Naive thymus-derived CD4-positive, alpha-beta T cell (primary cell): ENCODE measurements at regions of chr13 and their contacts with region 1.

Region 1: DNA sequence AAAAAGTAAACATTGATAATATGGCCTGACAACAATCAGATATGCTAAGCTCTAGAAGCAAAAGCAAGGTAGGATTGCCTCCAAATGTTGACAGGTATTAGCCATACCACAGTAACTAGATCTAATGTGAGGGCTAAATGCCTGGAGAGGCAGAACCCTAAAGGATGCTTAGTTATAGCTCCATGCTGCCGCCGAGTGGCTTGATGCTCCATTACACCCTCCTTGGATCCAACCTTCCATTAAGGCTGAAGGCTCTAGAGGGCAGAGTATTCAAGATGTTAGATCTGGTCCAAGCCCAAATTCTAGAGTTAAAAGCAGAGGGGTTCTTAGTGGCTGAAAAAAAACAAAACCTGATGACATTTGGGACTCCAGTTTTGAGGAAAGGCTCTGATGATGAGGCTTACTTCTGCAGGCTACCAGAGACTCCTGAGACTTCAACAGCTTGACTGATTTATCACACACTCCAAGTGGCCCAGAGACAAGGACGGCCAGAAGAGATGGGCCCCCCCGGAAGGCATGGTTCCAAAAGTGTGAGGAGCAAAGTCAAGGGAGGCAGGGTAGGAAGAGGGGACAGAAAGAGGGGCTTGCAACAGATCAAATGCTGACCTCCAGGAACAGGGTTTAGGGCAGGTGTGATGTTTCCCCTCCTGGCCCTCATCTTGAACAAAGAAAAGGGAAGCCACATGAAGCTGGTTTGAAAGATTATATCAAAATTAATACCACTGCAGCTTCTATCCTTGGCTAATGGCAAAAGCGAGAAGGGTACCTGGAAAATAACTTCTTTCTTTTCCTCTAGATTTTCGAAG is 21.9 kb upstream of the CPB2 start:
- DNase-seq: peak; percentile 44 to 74 (median 66)
- ATAC-seq: peak; percentile 94
- H3K4me3 ChIP-seq: no peak overlapping the region
- H3K4me3 Mint-ChIP-seq: peak overlapping the region in 3 of 10 donors; percentile 6 to 34 (median 8)
- H3K27ac ChIP-seq: peak overlapping the region; percentile 66
- H3K27ac Mint-ChIP-seq: peak overlapping the region; percentile 60 to 96 (median 87)
- H3K4me1 ChIP-seq: peaks cover 11 to 31% of the 10 kb centered on the region in 2 donors
- H3K4me1 Mint-ChIP-seq: peaks cover 35 to 54% (median 49%) of the 10 kb centered on the region in 7 donors
- H3K27me3 ChIP-seq: no peaks in the 10 kb centered on the region
- H3K27me3 Mint-ChIP-seq: peaks cover 0 to 2% (median 0%) of the 10 kb centered on the region in 5 donors

Region 2: GRCh38 chr13:45511310-45512097 is 615.3 kb before region 1 on chr13:
- CTCF ChIA-PET with region 1: interaction called, 4 read pairs
- POLR2A ChIA-PET with region 1: no interaction called
- intact Hi-C with region 1: loop called (anchors 1 kb)
- DNase-seq: peak in 7 of 9 donors; percentile 41 to 72 (median 63)
- ATAC-seq: peak; percentile 95
- H3K4me3 ChIP-seq: no peak overlapping the region
- H3K4me3 Mint-ChIP-seq: no peak overlapping the region
- H3K27ac ChIP-seq: no peak overlapping the region
- H3K27ac Mint-ChIP-seq: peak overlapping the region in 7 of 9 donors; percentile 22 to 60 (median 46)
- H3K4me1 ChIP-seq: no peaks in the 10 kb centered on the region
- H3K4me1 Mint-ChIP-seq: peaks cover 3 to 7% (median 5%) of the 10 kb centered on the region in 7 donors
- H3K27me3 ChIP-seq: no peaks in the 10 kb centered on the region
- H3K27me3 Mint-ChIP-seq: no peaks in the 10 kb centered on the region

Region 3: DNA sequence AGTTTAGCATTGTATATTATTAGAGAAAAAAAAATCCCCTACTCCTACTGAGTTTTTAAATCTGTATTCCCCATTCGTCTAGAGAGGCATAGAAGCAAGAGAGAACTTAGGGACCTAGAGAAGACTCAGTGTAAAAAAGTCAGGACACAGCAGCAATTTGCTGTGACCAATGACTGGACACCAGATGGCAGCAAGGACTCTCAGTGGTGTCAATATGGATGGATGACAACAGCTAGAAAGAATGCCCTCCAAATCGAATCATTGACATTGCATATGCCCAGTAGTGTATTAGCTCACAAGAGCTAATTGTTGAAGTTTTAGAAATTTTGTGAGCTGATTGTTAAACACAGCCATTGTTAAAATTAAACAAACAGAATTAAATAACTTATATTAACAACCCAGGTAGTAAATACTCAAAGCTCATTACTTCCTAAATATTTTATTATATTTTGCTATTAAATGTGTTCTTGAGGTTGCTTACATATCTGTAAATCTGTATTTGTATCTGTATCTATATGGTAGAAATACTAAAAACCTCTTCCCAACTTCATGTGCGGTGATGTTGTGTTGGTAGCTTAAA is 319.1 kb before region 1 on chr13:
- CTCF ChIA-PET with region 1: interaction called, 6 read pairs
- POLR2A ChIA-PET with region 1: no interaction called
- intact Hi-C with region 1: loop called (anchors 1 to 2 kb)
- DNase-seq: peak in 3 of 9 donors; percentile 16 to 23 (median 20)
- ATAC-seq: peak; percentile 48
- H3K4me3 ChIP-seq: no peak overlapping the region
- H3K4me3 Mint-ChIP-seq: no peak overlapping the region
- H3K27ac ChIP-seq: no peak overlapping the region
- H3K27ac Mint-ChIP-seq: no peak overlapping the region
- H3K4me1 ChIP-seq: no peaks in the 10 kb centered on the region
- H3K4me1 Mint-ChIP-seq: peaks cover 0 to 12% (median 4%) of the 10 kb centered on the region in 7 donors
- H3K27me3 ChIP-seq: no peaks in the 10 kb centered on the region
- H3K27me3 Mint-ChIP-seq: no peaks in the 10 kb centered on the region

Region 4: DNA sequence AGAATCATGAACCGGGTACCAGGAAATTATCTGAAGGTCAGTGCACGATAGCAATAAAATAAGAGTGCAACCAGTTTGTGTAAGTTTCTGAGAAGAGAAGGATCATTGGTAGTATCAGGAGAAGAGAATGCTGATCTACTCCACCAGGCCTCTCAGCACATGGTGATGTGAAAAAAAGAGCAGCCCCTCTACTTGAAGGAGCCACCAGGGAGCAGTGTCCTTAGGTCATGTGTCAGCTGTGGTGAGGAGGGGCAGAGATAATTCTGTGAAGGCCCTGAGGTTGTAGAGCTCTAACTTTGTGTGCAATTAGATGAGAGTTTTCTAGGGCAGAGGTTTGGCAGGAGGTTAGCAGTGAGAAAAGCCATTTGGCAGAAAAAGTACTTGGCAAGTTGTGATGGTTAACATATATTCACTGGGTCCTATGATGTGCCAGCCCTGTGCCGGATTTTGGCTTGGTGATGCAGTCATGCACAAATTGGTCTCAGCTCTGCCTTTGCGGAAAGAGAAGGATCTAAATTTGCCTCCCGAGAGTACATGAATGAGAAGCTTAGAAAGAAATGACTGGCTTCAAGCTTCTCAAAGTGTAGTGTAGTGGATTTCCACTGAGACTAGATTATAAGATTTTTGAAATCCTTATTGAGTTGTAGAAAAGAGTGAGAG is 55.0 kb before region 1 on chr13:
- CTCF ChIA-PET with region 1: no interaction called
- POLR2A ChIA-PET with region 1: no interaction called
- intact Hi-C with region 1: loop called in 1 of 2 experiments (anchors 1 kb)
- DNase-seq: no peak
- ATAC-seq: no peak
- H3K4me3 ChIP-seq: no peak overlapping the region
- H3K4me3 Mint-ChIP-seq: no peak overlapping the region
- H3K27ac ChIP-seq: no peak overlapping the region
- H3K27ac Mint-ChIP-seq: no peak overlapping the region
- H3K4me1 ChIP-seq: no peaks in the 10 kb centered on the region
- H3K4me1 Mint-ChIP-seq: peaks cover 0 to 7% (median 0%) of the 10 kb centered on the region in 7 donors
- H3K27me3 ChIP-seq: no peaks in the 10 kb centered on the region
- H3K27me3 Mint-ChIP-seq: peaks cover 0 to 25% (median 4%) of the 10 kb centered on the region in 5 donors

Region 5: GRCh38 chr13:46088821-46089562 is 37.8 kb before region 1 on chr13:
- CTCF ChIA-PET with region 1: no interaction called
- POLR2A ChIA-PET with region 1: no interaction called
- intact Hi-C with region 1: no loop called
- DNase-seq: no peak
- ATAC-seq: no peak
- H3K4me3 ChIP-seq: no peak overlapping the region
- H3K4me3 Mint-ChIP-seq: no peak overlapping the region
- H3K27ac ChIP-seq: no peak overlapping the region
- H3K27ac Mint-ChIP-seq: no peak overlapping the region
- H3K4me1 ChIP-seq: no peaks in the 10 kb centered on the region
- H3K4me1 Mint-ChIP-seq: peaks cover 0 to 4% (median 0%) of the 10 kb centered on the region in 7 donors
- H3K27me3 ChIP-seq: no peaks in the 10 kb centered on the region
- H3K27me3 Mint-ChIP-seq: peaks cover 9 to 24% (median 13%) of the 10 kb centered on the region in 5 donors

Region 6: DNA sequence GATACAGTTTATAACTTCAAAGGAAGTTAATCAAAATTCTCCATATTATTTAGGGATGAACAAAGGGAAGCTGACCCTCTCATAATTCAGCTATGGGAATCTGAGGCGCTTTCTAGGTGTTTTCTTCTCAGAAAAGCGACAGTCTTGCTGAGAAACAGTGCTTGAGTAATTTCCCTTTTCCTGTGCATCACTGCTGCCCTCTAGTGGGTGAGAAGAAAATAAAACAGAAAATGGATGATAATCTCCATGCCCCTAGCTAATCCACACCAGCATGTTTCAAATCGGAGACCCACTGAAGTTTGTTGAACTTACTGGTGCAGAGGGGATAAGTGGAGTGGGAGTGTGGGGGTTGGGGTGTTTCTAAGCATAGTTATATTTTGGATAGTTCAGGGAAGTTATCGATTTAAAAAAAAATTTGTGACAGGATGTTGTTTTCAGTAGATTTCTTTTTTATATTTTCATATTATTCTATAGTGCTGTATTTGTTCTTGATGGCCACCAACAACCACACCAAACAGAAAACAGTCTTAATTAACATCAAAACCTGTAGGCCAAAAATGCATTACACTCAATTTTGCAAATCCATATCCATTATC is 33.8 kb after region 1 on chr13:
- CTCF ChIA-PET with region 1: interaction called, 4 read pairs
- POLR2A ChIA-PET with region 1: no interaction called
- intact Hi-C with region 1: loop called in 1 of 2 experiments (anchors 2 kb)
- DNase-seq: peak in 7 of 9 donors; percentile 59 to 78 (median 74)
- ATAC-seq: peak; percentile 91
- H3K4me3 ChIP-seq: no peak overlapping the region
- H3K4me3 Mint-ChIP-seq: peak overlapping the region; percentile 27 to 82 (median 74)
- H3K27ac ChIP-seq: peak overlapping the region; percentile 69
- H3K27ac Mint-ChIP-seq: peak overlapping the region; percentile 79 to 97 (median 91)
- H3K4me1 ChIP-seq: peaks cover 33 to 46% of the 10 kb centered on the region in 2 donors
- H3K4me1 Mint-ChIP-seq: peaks cover 49 to 58% (median 54%) of the 10 kb centered on the region in 7 donors
- H3K27me3 ChIP-seq: no peaks in the 10 kb centered on the region
- H3K27me3 Mint-ChIP-seq: no peaks in the 10 kb centered on the region

Region 7: DNA sequence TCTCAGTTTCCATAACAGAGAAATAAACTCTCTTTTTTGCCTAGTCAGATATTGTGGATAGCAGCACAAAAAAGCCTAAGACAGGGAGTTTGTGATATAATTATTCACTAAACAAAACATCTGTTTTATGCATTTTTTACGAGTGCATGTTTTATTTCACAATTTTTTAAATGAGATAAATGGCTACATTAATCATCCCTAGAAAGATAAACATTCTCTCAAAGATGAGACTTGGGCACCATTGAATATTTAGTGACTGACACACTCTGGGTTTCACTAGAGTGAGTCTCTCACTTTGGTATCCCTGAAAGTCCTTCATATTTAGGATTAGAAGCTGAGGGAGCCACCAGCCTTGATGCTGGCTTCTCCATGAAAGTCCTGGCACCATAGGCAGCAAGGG is 351.9 kb after region 1 on chr13:
- CTCF ChIA-PET with region 1: no interaction called
- POLR2A ChIA-PET with region 1: no interaction called
- intact Hi-C with region 1: no loop called
- DNase-seq: no peak
- ATAC-seq: no peak
- H3K4me3 ChIP-seq: no peak overlapping the region
- H3K4me3 Mint-ChIP-seq: no peak overlapping the region
- H3K27ac ChIP-seq: no peak overlapping the region
- H3K27ac Mint-ChIP-seq: no peak overlapping the region
- H3K4me1 ChIP-seq: no peaks in the 10 kb centered on the region
- H3K4me1 Mint-ChIP-seq: no peaks in the 10 kb centered on the region
- H3K27me3 ChIP-seq: no peaks in the 10 kb centered on the region
- H3K27me3 Mint-ChIP-seq: peaks cover 0 to 9% (median 2%) of the 10 kb centered on the region in 5 donors